ENCODE measurements at regions of chr12 and their contacts with region 1.

Region 1: GRCh38 chr12:1093166-1093751 is 102.2 kb downstream of the ERC1 start:
- DNase-seq: peak in 8 of 14 experiments; percentile 3 to 68 (median 28)
- ATAC-seq: peak; percentile 77
- H3K4me3 ChIP-seq: no peak overlapping the region
- H3K4me3 Mint-ChIP-seq: no peak overlapping the region
- H3K27ac ChIP-seq: no peak overlapping the region
- H3K27ac Mint-ChIP-seq: no peak overlapping the region
- H3K4me1 ChIP-seq: no peaks in the 10 kb centered on the region
- H3K4me1 Mint-ChIP-seq: peaks cover 16% of the 10 kb centered on the region
- H3K27me3 ChIP-seq: no peaks in the 10 kb centered on the region
- H3K27me3 Mint-ChIP-seq: no peaks in the 10 kb centered on the region
- CTCF ChIP-seq: peak; percentile 71

Region 2: DNA sequence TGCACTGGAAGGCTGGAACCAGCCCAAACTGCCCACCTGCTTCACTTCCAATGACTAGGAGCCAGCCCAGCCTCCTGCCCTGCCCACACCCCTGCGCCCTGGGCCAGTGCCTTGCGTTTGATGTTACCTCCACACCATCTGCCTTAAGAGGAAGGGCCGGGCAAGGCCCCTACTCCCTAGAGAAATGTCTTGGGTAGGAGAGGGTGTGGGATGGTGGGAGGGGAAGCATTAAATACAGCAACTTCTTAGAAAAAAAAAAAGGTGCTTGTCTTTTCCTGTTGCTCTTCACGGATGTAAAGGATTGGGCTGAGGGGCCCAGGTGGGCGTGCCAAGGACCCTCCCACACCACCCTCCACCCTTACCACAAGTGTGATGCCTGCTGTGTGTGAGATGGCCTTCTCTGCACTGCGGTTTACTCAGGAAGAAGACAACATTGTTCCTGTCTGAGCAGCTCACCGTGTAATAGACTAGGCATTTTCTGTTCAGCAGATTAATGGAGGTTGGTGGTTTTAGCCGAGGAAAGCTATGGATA is 529.9 kb before region 1 on chr12:
- CTCF ChIA-PET with region 1: no interaction called
- POLR2A ChIA-PET with region 1: no interaction called
- intact Hi-C with region 1: loop called in 1 of 2 experiments (anchors 5 kb)
- DNase-seq: peak; percentile 22 to 92 (median 71)
- ATAC-seq: peak; percentile 91
- H3K4me3 ChIP-seq: peak overlapping the region; percentile 47
- H3K4me3 Mint-ChIP-seq: peak overlapping the region; percentile 84
- H3K27ac ChIP-seq: peak overlapping the region; percentile 71 to 81
- H3K27ac Mint-ChIP-seq: peak overlapping the region; percentile 97
- H3K4me1 ChIP-seq: peaks cover 93% of the 10 kb centered on the region
- H3K4me1 Mint-ChIP-seq: peaks cover 92% of the 10 kb centered on the region
- H3K27me3 ChIP-seq: no peaks in the 10 kb centered on the region
- H3K27me3 Mint-ChIP-seq: no peaks in the 10 kb centered on the region
- CTCF ChIP-seq: no peak

Region 3: GRCh38 chr12:818733-819132 is 274.5 kb before region 1 on chr12:
- CTCF ChIA-PET with region 1: no interaction called
- POLR2A ChIA-PET with region 1: interaction called, 3 read pairs
- intact Hi-C with region 1: loop called (anchors 5 kb)
- DNase-seq: no peak
- ATAC-seq: no peak
- H3K4me3 ChIP-seq: no peak overlapping the region
- H3K4me3 Mint-ChIP-seq: no peak overlapping the region
- H3K27ac ChIP-seq: no peak overlapping the region
- H3K27ac Mint-ChIP-seq: peak overlapping the region; percentile 18
- H3K4me1 ChIP-seq: peaks cover 4% of the 10 kb centered on the region
- H3K4me1 Mint-ChIP-seq: peaks cover 64% of the 10 kb centered on the region
- H3K27me3 ChIP-seq: no peaks in the 10 kb centered on the region
- H3K27me3 Mint-ChIP-seq: no peaks in the 10 kb centered on the region
- CTCF ChIP-seq: no peak

Region 4: GRCh38 chr12:990661-991349 is 102.5 kb before region 1 on chr12 and contains the start of gene ERC1:
- CTCF ChIA-PET with region 1: no interaction called
- POLR2A ChIA-PET with region 1: interaction called, 3 read pairs
- intact Hi-C with region 1: loop called in 1 of 2 experiments (anchors 5 kb)
- DNase-seq: peak; percentile 68 to 94 (median 84)
- ATAC-seq: peak; percentile 81
- H3K4me3 ChIP-seq: peak within 1 kb of the TSS; percentile 89
- H3K4me3 Mint-ChIP-seq: peak within 1 kb of the TSS; percentile 99
- H3K27ac ChIP-seq: peak within 1 kb of the TSS; percentile 69 to 74
- H3K27ac Mint-ChIP-seq: peak within 1 kb of the TSS; percentile 96
- H3K4me1 ChIP-seq: peaks cover 23% of the 10 kb centered on the region
- H3K4me1 Mint-ChIP-seq: peaks cover 47% of the 10 kb centered on the region
- H3K27me3 ChIP-seq: no peaks in the 10 kb centered on the region
- H3K27me3 Mint-ChIP-seq: no peaks in the 10 kb centered on the region
- CTCF ChIP-seq: no peak
- total RNA-seq, gene ERC1: 40.1 to 49.6 TPM

Region 5: GRCh38 chr12:1131811-1132224 is 38.6 kb after region 1 on chr12:
- CTCF ChIA-PET with region 1: no interaction called
- POLR2A ChIA-PET with region 1: no interaction called
- intact Hi-C with region 1: no loop called
- DNase-seq: no peak
- ATAC-seq: no peak
- H3K4me3 ChIP-seq: no peak overlapping the region
- H3K4me3 Mint-ChIP-seq: no peak overlapping the region
- H3K27ac ChIP-seq: no peak overlapping the region
- H3K27ac Mint-ChIP-seq: peak overlapping the region; percentile 34
- H3K4me1 ChIP-seq: peaks cover 8% of the 10 kb centered on the region
- H3K4me1 Mint-ChIP-seq: peaks cover 49% of the 10 kb centered on the region
- H3K27me3 ChIP-seq: no peaks in the 10 kb centered on the region
- H3K27me3 Mint-ChIP-seq: no peaks in the 10 kb centered on the region
- CTCF ChIP-seq: no peak

Region 6: GRCh38 chr12:1147821-1148220 is 54.6 kb after region 1 on chr12:
- CTCF ChIA-PET with region 1: no interaction called
- POLR2A ChIA-PET with region 1: no interaction called
- intact Hi-C with region 1: no loop called
- DNase-seq: no peak
- ATAC-seq: no peak
- H3K4me3 ChIP-seq: no peak overlapping the region
- H3K4me3 Mint-ChIP-seq: no peak overlapping the region
- H3K27ac ChIP-seq: no peak overlapping the region
- H3K27ac Mint-ChIP-seq: no peak overlapping the region
- H3K4me1 ChIP-seq: no peaks in the 10 kb centered on the region
- H3K4me1 Mint-ChIP-seq: no peaks in the 10 kb centered on the region
- H3K27me3 ChIP-seq: no peaks in the 10 kb centered on the region
- H3K27me3 Mint-ChIP-seq: no peaks in the 10 kb centered on the region
- CTCF ChIP-seq: no peak

Region 7: GRCh38 chr12:1282670-1283335 is 189.5 kb after region 1 on chr12:
- CTCF ChIA-PET with region 1: no interaction called
- POLR2A ChIA-PET with region 1: no interaction called
- intact Hi-C with region 1: no loop called
- DNase-seq: no peak
- ATAC-seq: no peak
- H3K4me3 ChIP-seq: no peak overlapping the region
- H3K4me3 Mint-ChIP-seq: no peak overlapping the region
- H3K27ac ChIP-seq: no peak overlapping the region
- H3K27ac Mint-ChIP-seq: no peak overlapping the region
- H3K4me1 ChIP-seq: no peaks in the 10 kb centered on the region
- H3K4me1 Mint-ChIP-seq: peaks cover 12% of the 10 kb centered on the region
- H3K27me3 ChIP-seq: no peaks in the 10 kb centered on the region
- H3K27me3 Mint-ChIP-seq: no peaks in the 10 kb centered on the region
- CTCF ChIP-seq: no peak

Region 8: GRCh38 chr12:1605129-1606020 is 512.1 kb after region 1 on chr12:
- CTCF ChIA-PET with region 1: no interaction called
- POLR2A ChIA-PET with region 1: no interaction called
- intact Hi-C with region 1: no loop called
- DNase-seq: peak; percentile 37 to 87 (median 50)
- ATAC-seq: peak; percentile 69
- H3K4me3 ChIP-seq: peak overlapping the region; percentile 51
- H3K4me3 Mint-ChIP-seq: peak overlapping the region; percentile 79
- H3K27ac ChIP-seq: no peak overlapping the region
- H3K27ac Mint-ChIP-seq: peak overlapping the region; percentile 10
- H3K4me1 ChIP-seq: peaks cover 26% of the 10 kb centered on the region
- H3K4me1 Mint-ChIP-seq: peaks cover 39% of the 10 kb centered on the region
- H3K27me3 ChIP-seq: no peaks in the 10 kb centered on the region
- H3K27me3 Mint-ChIP-seq: no peaks in the 10 kb centered on the region
- CTCF ChIP-seq: peak; percentile 77